Mammary epithelial cell (primary cell): ENCODE measurements at regions of chr12 and their contacts with region 1.

Region 1: DNA sequence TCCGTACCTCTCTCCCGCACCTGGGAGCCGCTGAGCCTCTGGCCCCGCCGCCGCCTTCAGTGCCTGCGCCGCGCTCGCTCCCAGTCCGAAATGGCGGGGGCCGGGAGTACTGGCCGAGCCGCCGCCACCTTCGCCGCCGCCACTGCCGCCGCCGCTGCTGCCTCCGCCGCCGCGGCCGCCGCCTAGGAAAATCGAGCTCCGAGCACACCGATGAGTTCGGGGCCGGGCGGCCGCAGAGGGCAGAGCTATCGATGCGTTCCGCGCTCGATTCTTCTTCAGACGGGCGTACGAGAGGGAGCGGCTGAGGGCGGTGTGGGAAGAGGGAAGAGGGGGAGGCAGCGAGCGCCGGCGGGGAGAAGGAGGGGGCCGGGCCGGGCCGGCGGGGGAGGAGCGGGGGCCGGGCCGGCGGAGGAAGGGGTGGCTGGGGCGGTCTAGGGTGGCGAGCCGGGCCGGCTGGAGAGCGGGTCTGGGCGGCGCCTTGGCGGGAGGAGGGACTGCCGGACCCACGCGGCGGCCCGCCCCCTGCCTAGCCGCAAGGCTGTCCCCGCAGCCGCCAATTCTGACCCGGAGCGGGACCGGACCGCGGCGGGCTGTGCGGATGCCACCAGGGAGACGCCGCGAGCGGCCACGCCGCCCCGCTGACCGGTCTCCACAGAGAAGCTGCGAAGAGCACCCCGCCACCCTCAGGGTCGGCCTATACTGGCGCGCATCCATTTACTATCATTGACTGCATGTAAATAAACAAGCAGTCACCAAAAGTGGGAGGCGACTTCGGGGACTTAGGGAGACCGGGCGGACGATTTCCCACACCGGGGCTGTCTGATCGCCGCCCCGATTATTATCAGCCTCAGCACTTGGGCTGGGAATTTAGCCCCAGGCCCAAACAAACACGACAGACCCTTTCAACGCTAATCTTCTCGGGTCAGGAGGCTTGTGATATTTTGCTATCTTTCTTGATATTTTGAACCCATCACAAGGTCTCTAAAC is at the start of gene KRAS:
- DNase-seq: peak; percentile 95
- H3K4me3 ChIP-seq: peak within 1 kb of the TSS; percentile 71 to 88 (median 75)
- H3K27ac ChIP-seq: peak within 1 kb of the TSS; percentile 54
- H3K4me1 ChIP-seq: no peaks in the 10 kb centered on the region
- H3K27me3 ChIP-seq: no peaks in the 10 kb centered on the region
- CTCF ChIP-seq: no peak
- total RNA-seq, gene KRAS: 23.5 to 23.9 TPM

Region 2: DNA sequence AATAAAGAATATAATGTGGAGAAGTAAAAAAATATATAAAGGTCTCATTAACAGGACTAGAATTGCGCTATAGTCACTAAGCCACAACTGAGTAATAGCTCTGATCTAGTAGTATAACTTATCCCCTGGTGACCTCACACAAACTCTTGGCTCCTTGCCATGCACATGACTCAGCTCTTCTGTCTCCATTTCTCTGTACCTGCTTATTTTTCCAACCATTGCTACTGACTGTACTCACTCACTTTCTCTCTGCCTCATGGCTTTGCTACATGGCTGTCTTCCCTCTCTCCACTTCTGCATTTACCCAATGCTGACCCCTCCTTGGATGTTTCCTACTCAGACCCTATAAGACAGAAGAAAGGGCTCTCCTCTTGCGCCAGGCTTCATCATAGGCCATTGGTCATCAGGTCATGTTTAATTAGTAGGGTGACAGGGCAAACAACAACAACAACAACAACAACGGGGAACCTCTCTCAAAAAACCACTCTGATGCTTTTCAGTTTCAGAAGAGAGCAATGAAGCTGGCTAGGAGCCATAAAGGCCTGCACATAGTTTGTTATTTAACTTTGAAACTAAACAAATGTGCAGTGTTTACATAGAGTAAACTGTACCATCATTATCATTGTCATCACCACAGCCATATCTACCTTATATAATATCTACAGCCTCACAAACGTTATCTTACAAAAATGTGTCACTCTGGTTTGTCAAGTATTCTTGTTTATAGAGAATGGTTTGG is 25.3 kb after region 1 on chr12:
- CTCF ChIA-PET with region 1: no interaction called
- dilution Hi-C with region 1: no loop called
- in situ Hi-C with region 1: no loop called
- intact Hi-C with region 1: loop called (anchors 2 kb)
- DNase-seq: peak; percentile 93
- H3K4me3 ChIP-seq: no peak overlapping the region
- H3K27ac ChIP-seq: no peak overlapping the region
- H3K4me1 ChIP-seq: peaks cover 6% of the 10 kb centered on the region
- H3K27me3 ChIP-seq: no peaks in the 10 kb centered on the region
- CTCF ChIP-seq: no peak

Region 3: GRCh38 chr12:25332143-25332542 is 81.1 kb after region 1 on chr12:
- CTCF ChIA-PET with region 1: no interaction called
- dilution Hi-C with region 1: no loop called
- in situ Hi-C with region 1: no loop called
- intact Hi-C with region 1: loop called (anchors 5 kb)
- DNase-seq: no peak
- H3K4me3 ChIP-seq: no peak overlapping the region
- H3K27ac ChIP-seq: no peak overlapping the region
- H3K4me1 ChIP-seq: peaks cover 7% of the 10 kb centered on the region
- H3K27me3 ChIP-seq: no peaks in the 10 kb centered on the region
- CTCF ChIP-seq: no peak

Region 4: GRCh38 chr12:25557830-25558436 is 306.9 kb after region 1 on chr12:
- CTCF ChIA-PET with region 1: no interaction called
- dilution Hi-C with region 1: no loop called
- in situ Hi-C with region 1: no loop called
- intact Hi-C with region 1: loop called (anchors 10 kb)
- DNase-seq: peak; percentile 45
- H3K4me3 ChIP-seq: no peak overlapping the region
- H3K27ac ChIP-seq: peak overlapping the region; percentile 4
- H3K4me1 ChIP-seq: no peaks in the 10 kb centered on the region
- H3K27me3 ChIP-seq: no peaks in the 10 kb centered on the region
- CTCF ChIP-seq: peak; percentile 38 to 62